Right cardiac atrium (tissue), 5 donors: ENCODE measurements at regions of chr15 and their contacts with region 1.

Region 1: DNA sequence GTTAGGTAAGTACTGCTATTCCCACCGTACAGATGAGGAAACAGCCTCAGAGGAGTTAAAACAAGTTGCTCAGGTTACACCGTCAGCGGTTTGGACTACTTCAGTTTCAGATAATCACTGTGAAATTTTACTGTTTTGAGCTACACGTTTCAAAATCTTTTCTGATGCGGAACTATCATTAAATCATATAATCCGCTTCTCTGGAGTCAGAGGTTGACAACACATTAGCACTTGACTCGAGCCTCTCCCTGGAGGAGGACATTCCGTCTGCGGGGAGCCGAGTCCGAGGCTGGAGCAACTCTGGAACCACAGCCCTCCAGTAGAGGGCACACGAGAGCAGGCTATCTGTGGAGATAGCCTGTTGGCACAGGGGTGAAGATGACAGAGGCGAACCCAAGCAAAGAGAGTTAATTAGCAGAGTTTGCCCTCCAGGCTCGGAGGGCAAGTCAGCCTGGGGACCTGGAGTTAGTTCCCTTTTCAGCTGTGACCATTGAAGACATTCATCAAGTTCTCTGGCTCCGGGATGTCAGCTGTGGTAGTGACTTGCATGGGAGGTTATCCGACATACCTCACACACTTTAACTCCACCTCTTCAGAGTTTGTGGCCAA is 131.2 kb downstream of the IGF1R start:
- DNase-seq: peak; percentile 80 to 91 (median 90)
- ATAC-seq: peak; percentile 87 to 92
- H3K4me3 ChIP-seq: no peak overlapping the region
- H3K27ac ChIP-seq: no peak overlapping the region
- H3K4me1 ChIP-seq: no peaks in the 10 kb centered on the region
- H3K27me3 ChIP-seq: no peaks in the 10 kb centered on the region

Region 2: GRCh38 chr15:98658831-98659699 is 120.5 kb before region 1 on chr15:
- intact Hi-C with region 1: loop called in 3 of 4 experiments (anchors 5 to 10 kb)
- DNase-seq: peak in 1 of 3 donors; percentile 39
- ATAC-seq: peak; percentile 66 to 79
- H3K4me3 ChIP-seq: no peak overlapping the region
- H3K27ac ChIP-seq: no peak overlapping the region
- H3K4me1 ChIP-seq: peaks cover 6% of the 10 kb centered on the region
- H3K27me3 ChIP-seq: no peaks in the 10 kb centered on the region

Region 3: GRCh38 chr15:99068186-99068585 is 288.6 kb after region 1 on chr15:
- intact Hi-C with region 1: loop called in 1 of 4 experiments (anchors 10 kb)
- DNase-seq: no peak
- ATAC-seq: no peak
- H3K4me3 ChIP-seq: no peak overlapping the region
- H3K27ac ChIP-seq: no peak overlapping the region
- H3K4me1 ChIP-seq: no peaks in the 10 kb centered on the region
- H3K27me3 ChIP-seq: no peaks in the 10 kb centered on the region